ENCODE measurements at regions of chr20 and their contacts with region 1.

Region 1: GRCh38 chr20:34872622-34873224 is at the start of gene GGT7:
- DNase-seq: peak; percentile 93
- H3K4me3 ChIP-seq: peak within 1 kb of the TSS; percentile 72 to 88 (median 80)
- H3K27ac ChIP-seq: peak within 1 kb of the TSS; percentile 80 to 87 (median 82)
- H3K4me1 ChIP-seq: peaks cover 24 to 62% (median 52%) of the 10 kb centered on the region in 4 donors
- H3K27me3 ChIP-seq: no peaks in the 10 kb centered on the region
- CTCF ChIP-seq: peak; percentile 78 to 80 (median 79)
- EP300 ChIP-seq: no peak
- POLR2A ChIP-seq: peak; percentile 50
- total RNA-seq, gene GGT7: 7.6 to 11.9 (median 9.4) TPM

Region 2: DNA sequence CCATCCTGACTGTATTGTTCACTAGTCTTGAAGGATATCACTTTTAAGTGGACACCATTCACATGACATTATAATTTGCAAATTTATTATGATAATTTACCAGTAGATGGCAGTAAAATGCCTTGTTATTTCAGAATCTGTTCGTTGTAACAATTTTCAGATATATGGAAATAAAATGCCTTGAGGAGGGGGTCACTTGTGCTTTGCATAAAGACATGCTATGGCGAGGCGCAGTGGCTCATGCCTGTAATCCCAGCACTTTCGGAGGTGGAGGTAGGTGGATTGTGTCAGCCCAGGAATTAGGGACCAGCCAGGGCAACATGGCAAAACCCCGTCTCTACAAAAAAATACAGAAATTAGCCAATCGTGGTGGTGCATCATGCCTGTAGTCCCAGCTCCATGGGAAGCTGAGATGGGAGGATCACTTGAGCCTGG is 38.2 kb before region 1 on chr20:
- intact Hi-C with region 1: loop called (anchors 5 kb)
- DNase-seq: no peak
- H3K4me3 ChIP-seq: no peak overlapping the region
- H3K27ac ChIP-seq: no peak overlapping the region
- H3K4me1 ChIP-seq: peaks cover 0 to 5% (median 0%) of the 10 kb centered on the region in 4 donors
- H3K27me3 ChIP-seq: no peaks in the 10 kb centered on the region
- CTCF ChIP-seq: peak; percentile 33 to 52 (median 49)
- EP300 ChIP-seq: no peak
- POLR2A ChIP-seq: no peak

Region 3: GRCh38 chr20:34955232-34956040 is 82.7 kb after region 1 on chr20 and contains the starts of genes GSS and MYH7B:
- intact Hi-C with region 1: loop called (anchors 1 kb)
- DNase-seq: peak; percentile 99
- H3K4me3 ChIP-seq: peak within 1 kb of the TSS; percentile 66 to 81 (median 74)
- H3K27ac ChIP-seq: peak within 1 kb of the TSS; percentile 84 to 92 (median 89)
- H3K4me1 ChIP-seq: peaks cover 12 to 20% (median 17%) of the 10 kb centered on the region in 4 donors
- H3K27me3 ChIP-seq: no peaks in the 10 kb centered on the region
- CTCF ChIP-seq: peak; percentile 61 to 85 (median 64)
- EP300 ChIP-seq: no peak
- POLR2A ChIP-seq: peak; percentile 73
- total RNA-seq, gene GSS: 27.7 to 36.1 (median 28.5) TPM
- total RNA-seq, gene MYH7B: 0.17 to 0.84 (median 0.37) TPM

Region 4: DNA sequence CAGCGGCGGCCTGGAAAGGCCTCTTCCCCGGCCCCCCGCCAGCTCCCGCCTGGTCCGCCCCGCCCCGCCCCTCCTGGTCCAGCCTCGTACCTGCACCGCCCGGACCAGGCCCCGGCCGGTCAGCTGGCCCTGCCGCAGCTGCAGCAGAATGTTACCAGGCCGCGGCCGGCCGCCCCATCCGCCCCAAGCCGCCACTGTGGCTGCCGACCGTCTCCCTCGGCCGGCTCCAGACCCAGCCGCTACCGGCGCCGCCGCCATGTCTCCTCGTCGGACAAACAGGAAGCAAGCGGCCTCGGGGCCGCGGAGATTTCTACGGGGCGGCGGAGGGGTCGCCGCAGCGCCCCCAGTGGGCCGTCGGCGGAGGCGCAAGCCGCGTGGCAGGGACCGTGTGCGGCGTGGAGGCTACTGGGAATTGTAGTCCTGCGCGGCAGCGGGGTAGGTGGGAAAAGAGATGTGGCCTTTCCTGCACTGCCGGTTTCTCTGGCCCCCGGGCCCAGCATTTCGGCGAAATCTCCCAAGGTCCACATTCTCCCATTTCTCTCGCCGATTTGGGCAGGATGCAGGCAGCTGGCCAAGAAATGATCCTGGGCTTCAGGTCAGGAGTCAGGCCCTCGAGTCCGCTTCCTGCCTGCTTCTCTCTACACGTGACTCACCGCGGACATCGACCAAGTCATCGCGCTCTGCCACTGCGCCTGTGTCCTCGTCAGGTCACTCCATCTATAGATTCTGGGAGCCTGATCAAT is 220.0 kb after region 1 on chr20 and contains the start of gene TRPC4AP:
- intact Hi-C with region 1: loop called (anchors 5 kb)
- DNase-seq: peak; percentile 96
- H3K4me3 ChIP-seq: peak within 1 kb of the TSS; percentile 91 to 99 (median 96)
- H3K27ac ChIP-seq: peak within 1 kb of the TSS; percentile 93 to 97 (median 95)
- H3K4me1 ChIP-seq: peaks cover 41 to 58% (median 51%) of the 10 kb centered on the region in 4 donors
- H3K27me3 ChIP-seq: no peaks in the 10 kb centered on the region
- CTCF ChIP-seq: peak; percentile 96 to 98 (median 97)
- EP300 ChIP-seq: no peak
- POLR2A ChIP-seq: peak; percentile 26
- total RNA-seq, gene TRPC4AP: 44.1 to 58.2 (median 52.1) TPM